Heart right ventricle (tissue), 16 donors: ENCODE measurements at regions of chr13 and their contacts with region 1.

Region 1: GRCh38 chr13:41352935-41353840 is 42.1 kb downstream of the NAA16 start:
- DNase-seq: peak in 1 of 2 donors; percentile 13
- ATAC-seq: peak in 6 of 8 donors; percentile 36 to 59 (median 54)
- H3K4me3 ChIP-seq: no peak overlapping the region
- H3K27ac ChIP-seq: peak overlapping the region in 1 of 10 donors; percentile 5
- H3K4me1 ChIP-seq: peaks cover 0 to 40% (median 0%) of the 10 kb centered on the region in 9 donors
- H3K27me3 ChIP-seq: no peaks in the 10 kb centered on the region
- CTCF ChIP-seq: peak; percentile 78 to 90 (median 83)

Region 2: GRCh38 chr13:39663958-39664357 is 1689.2 kb before region 1 on chr13:
- intact Hi-C with region 1: loop called in 1 of 10 experiments (anchors 5 kb)
- DNase-seq: no peak
- ATAC-seq: no peak
- H3K4me3 ChIP-seq: no peak overlapping the region
- H3K27ac ChIP-seq: no peak overlapping the region
- H3K4me1 ChIP-seq: no peaks in the 10 kb centered on the region
- H3K27me3 ChIP-seq: no peaks in the 10 kb centered on the region
- CTCF ChIP-seq: no peak

Region 3: GRCh38 chr13:41456768-41457588 is 103.8 kb after region 1 on chr13 and contains the start of gene RGCC:
- intact Hi-C with region 1: loop called in 1 of 10 experiments (anchors 5 kb)
- DNase-seq: peak; percentile 80 to 83
- ATAC-seq: peak; percentile 83 to 92 (median 90)
- H3K4me3 ChIP-seq: peak within 1 kb of the TSS; percentile 62 to 91 (median 74)
- H3K27ac ChIP-seq: peak within 1 kb of the TSS; percentile 76 to 91 (median 84)
- H3K4me1 ChIP-seq: peaks cover 0 to 34% (median 19%) of the 10 kb centered on the region in 9 donors
- H3K27me3 ChIP-seq: peaks cover 0 to 33% (median 11%) of the 10 kb centered on the region in 7 donors
- CTCF ChIP-seq: no peak
- total RNA-seq, gene RGCC: 15.6 to 63.2 (median 40.0) TPM

Region 4: GRCh38 chr13:41708713-41709112 is 355.5 kb after region 1 on chr13:
- intact Hi-C with region 1: no loop called
- DNase-seq: peak; percentile 13 to 35
- ATAC-seq: peak; percentile 60 to 77 (median 73)
- H3K4me3 ChIP-seq: no peak overlapping the region
- H3K27ac ChIP-seq: peak overlapping the region in 7 of 10 donors; percentile 33 to 79 (median 62)
- H3K4me1 ChIP-seq: peaks cover 2 to 58% (median 34%) of the 10 kb centered on the region in 9 donors
- H3K27me3 ChIP-seq: no peaks in the 10 kb centered on the region
- CTCF ChIP-seq: no peak